Heart left ventricle (tissue), 16 donors: ENCODE measurements at regions of chr13 and their contacts with region 1.

Region 1: DNA sequence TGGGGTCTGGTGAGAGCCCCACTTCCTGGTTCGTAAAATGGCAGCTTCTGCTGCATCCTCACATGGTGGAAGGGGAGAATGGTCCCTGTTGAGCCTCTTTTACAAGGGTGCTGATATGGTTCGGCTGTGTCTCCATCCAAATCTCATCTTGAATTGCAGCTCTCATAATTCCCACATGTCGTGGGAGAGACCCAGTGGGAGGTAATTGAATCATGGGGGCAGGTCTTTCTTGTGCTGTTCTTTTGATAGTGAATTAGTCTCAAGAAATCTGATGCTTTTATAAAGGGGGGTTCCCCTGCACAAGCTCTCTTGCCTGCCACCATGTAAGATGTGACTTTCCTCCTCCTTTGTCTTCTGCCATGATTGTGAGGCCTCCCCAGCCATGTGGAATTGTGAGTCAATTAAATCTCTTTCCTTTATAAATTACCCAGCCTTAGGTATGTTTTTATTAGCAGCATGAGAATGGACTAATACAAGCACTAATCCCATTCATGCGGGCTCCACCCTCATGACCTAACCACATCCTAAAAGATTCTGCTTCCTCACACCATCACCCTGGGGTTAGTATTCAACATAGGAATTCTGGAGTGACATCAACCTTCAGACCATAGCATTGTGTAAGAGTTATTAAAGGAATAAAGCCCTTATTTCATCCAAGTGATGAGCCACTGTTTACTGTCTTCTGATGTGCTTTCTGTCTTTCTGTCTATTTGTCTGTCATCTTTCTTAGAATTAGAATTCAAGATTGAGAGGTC is 159.0 kb upstream of the IRS2 start:
- DNase-seq: no peak
- ATAC-seq: no peak
- H3K4me3 ChIP-seq: no peak overlapping the region
- H3K27ac ChIP-seq: no peak overlapping the region
- H3K4me1 ChIP-seq: no peaks in the 10 kb centered on the region
- H3K27me3 ChIP-seq: peaks cover 0 to 4% (median 0%) of the 10 kb centered on the region in 9 donors
- CTCF ChIP-seq: no peak
- POLR2A ChIP-seq: no peak

Region 2: GRCh38 chr13:109869312-109870237 is 75.8 kb before region 1 on chr13:
- intact Hi-C with region 1: no loop called
- DNase-seq: peak; percentile 73 to 91 (median 90)
- ATAC-seq: peak; percentile 79 to 93 (median 88)
- H3K4me3 ChIP-seq: peak overlapping the region in 11 of 12 donors; percentile 13 to 56 (median 42)
- H3K27ac ChIP-seq: peak overlapping the region; percentile 22 to 79 (median 68)
- H3K4me1 ChIP-seq: peaks cover 0 to 30% (median 13%) of the 10 kb centered on the region in 12 donors
- H3K27me3 ChIP-seq: no peaks in the 10 kb centered on the region
- CTCF ChIP-seq: peak in 6 of 12 donors; percentile 13 to 55 (median 34)
- POLR2A ChIP-seq: no peak

Region 3: GRCh38 chr13:109897988-109898624 is 47.3 kb before region 1 on chr13:
- intact Hi-C with region 1: loop called in 1 of 10 experiments (anchors 5 kb)
- DNase-seq: no peak
- ATAC-seq: peak in 2 of 4 donors; percentile 31 to 58
- H3K4me3 ChIP-seq: no peak overlapping the region
- H3K27ac ChIP-seq: no peak overlapping the region
- H3K4me1 ChIP-seq: peaks cover 0 to 14% (median 0%) of the 10 kb centered on the region in 12 donors
- H3K27me3 ChIP-seq: no peaks in the 10 kb centered on the region
- CTCF ChIP-seq: no peak
- POLR2A ChIP-seq: no peak

Region 4: GRCh38 chr13:109989155-109989554 is 43.8 kb after region 1 on chr13:
- intact Hi-C with region 1: no loop called
- DNase-seq: no peak
- ATAC-seq: no peak
- H3K4me3 ChIP-seq: no peak overlapping the region
- H3K27ac ChIP-seq: no peak overlapping the region
- H3K4me1 ChIP-seq: no peaks in the 10 kb centered on the region
- H3K27me3 ChIP-seq: peaks cover 0 to 3% (median 0%) of the 10 kb centered on the region in 9 donors
- CTCF ChIP-seq: no peak
- POLR2A ChIP-seq: no peak